ENCODE measurements at regions of chr22 and their contacts with region 1.

Region 1: DNA sequence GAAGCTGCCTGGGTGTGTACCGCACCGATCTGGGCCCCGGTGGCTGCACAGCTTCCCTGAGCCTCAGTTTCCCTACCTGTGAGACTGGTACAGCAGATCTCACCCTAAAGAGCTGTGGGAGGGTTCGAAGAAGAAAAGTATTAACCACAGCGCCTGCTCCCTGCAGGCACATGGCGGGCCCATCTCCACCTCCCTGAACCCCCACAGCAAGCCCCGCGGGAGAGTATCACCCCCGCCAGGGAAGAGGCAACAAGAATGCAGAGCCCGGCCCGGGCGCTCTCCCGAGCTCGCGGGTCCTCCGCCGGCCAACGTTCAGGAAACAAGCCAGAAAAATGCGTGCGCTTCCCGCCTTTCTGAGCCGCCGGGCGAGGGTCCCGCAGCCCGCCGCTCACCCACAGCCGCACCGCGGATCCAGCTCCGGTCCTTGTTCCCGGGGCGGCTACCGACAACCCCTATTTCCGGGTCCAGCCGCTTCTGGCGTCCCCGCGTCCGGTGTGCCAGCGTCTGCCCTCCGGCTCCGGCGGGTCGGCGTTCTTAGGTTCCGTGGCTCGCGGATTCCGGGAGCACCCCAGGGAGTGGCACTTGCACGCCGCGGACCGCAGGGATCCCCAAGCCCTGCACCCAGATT is at the start of gene TOP3B:
- DNase-seq: peak; percentile 79
- ATAC-seq: peak; percentile 94
- H3K4me3 Mint-ChIP-seq: peak within 1 kb of the TSS; percentile 88
- H3K27ac Mint-ChIP-seq: peak within 1 kb of the TSS; percentile 87
- H3K4me1 Mint-ChIP-seq: peaks cover 37% of the 10 kb centered on the region
- H3K27me3 Mint-ChIP-seq: no peaks in the 10 kb centered on the region
- CTCF ChIP-seq: no peak
- total RNA-seq, gene TOP3B: 60.4 and 83.4 TPM in 2 replicates

Region 2: DNA sequence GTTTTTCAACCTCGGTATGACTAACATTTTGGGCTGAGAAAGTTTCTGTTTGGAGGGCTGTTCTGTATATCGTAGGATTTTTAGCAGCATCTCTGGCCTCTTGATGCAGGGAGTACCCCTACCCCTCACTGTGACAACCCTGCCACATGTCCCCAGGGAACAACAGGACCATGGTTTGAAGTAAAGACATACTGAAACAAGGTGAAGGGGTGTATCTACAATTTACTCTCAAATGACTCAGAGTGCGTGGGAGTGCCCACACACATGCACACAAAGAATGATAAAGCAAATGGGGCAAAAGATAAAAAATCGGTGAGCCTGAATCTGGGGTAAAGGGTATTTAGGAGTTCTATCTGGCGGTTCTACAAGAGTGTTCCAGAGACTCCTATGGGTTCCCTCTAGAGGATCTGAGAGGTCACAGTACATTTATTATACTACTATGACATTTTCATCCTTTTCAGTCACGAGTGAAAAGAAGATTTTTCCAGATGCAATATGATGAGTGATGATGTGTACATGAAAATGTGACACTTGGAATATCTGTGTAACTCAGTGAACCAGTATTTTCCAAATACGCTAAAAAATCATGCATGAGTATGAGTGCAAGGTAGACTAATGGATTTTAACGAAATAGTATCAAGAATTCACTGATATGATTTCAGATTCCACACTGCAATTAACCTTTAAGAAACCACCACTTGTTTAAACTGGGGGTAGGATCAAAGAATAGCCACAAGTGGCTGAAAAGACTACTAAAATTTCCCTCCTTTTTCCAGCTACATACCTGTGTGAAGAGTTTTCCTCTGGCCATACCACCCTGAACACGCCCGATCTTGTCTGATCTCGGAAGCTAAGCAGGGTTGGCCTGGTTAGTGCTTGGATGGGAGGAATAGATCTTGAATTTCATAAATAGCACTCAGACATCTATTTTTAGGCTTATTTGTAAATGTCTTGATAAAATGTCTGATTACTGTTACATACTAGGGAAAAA is 190.5 kb before region 1 on chr22:
- CTCF ChIA-PET with region 1: no interaction called
- POLR2A ChIA-PET with region 1: no interaction called
- intact Hi-C with region 1: no loop called
- DNase-seq: no peak
- ATAC-seq: peak; percentile 73
- H3K4me3 Mint-ChIP-seq: no peak overlapping the region
- H3K27ac Mint-ChIP-seq: peak overlapping the region; percentile 4
- H3K4me1 Mint-ChIP-seq: peaks cover 8% of the 10 kb centered on the region
- H3K27me3 Mint-ChIP-seq: no peaks in the 10 kb centered on the region
- CTCF ChIP-seq: no peak

Region 3: GRCh38 chr22:21972293-21972779 is 10.1 kb before region 1 on chr22:
- CTCF ChIA-PET with region 1: interaction called, 13 read pairs
- POLR2A ChIA-PET with region 1: interaction called, 12 read pairs
- intact Hi-C with region 1: no loop called
- DNase-seq: peak; percentile 56
- ATAC-seq: peak; percentile 77
- H3K4me3 Mint-ChIP-seq: no peak overlapping the region
- H3K27ac Mint-ChIP-seq: no peak overlapping the region
- H3K4me1 Mint-ChIP-seq: peaks cover 2% of the 10 kb centered on the region
- H3K27me3 Mint-ChIP-seq: no peaks in the 10 kb centered on the region
- CTCF ChIP-seq: peak; percentile 79

Region 4: DNA sequence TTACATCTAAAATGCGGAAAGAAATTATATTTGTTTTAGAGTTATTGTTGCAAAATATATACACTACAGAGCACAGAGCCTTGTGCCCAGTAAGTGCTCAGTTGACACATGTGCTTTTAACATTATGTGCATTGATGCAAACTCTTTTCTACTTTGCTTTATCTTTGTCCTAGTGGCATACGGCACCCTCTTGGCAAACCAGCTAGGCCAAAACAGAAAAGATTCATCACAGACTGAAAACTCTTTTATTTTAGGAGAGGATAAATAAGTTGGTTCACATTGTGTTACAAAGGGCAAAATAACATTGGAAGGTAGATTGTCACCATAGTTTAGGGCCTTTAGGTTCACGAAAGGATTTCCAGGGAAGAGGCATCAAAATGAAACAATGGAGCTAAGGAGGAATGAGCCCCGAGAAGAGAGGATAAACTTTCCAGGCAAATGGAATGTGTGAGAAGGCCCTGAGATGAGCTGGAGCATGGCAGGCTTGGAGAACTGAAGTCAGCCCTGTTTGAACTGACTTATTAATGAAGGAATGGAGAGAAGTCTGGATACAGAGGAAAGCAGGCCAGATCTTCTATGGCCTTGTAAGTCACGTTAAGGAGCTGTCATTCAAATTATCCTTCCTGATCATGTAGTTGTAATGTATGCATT is 23.6 kb after region 1 on chr22:
- CTCF ChIA-PET with region 1: no interaction called
- POLR2A ChIA-PET with region 1: interaction called, 16 read pairs
- intact Hi-C with region 1: no loop called
- DNase-seq: no peak
- ATAC-seq: no peak
- H3K4me3 Mint-ChIP-seq: no peak overlapping the region
- H3K27ac Mint-ChIP-seq: no peak overlapping the region
- H3K4me1 Mint-ChIP-seq: peaks cover 18% of the 10 kb centered on the region
- H3K27me3 Mint-ChIP-seq: no peaks in the 10 kb centered on the region
- CTCF ChIP-seq: no peak

Measured in activated B cell treated with CpG ODN at 0.5 μM for 24 hours (primary cell).